HCT116 (cell line): ENCODE measurements at regions of chr1 and their contacts with region 1.

Region 1: DNA sequence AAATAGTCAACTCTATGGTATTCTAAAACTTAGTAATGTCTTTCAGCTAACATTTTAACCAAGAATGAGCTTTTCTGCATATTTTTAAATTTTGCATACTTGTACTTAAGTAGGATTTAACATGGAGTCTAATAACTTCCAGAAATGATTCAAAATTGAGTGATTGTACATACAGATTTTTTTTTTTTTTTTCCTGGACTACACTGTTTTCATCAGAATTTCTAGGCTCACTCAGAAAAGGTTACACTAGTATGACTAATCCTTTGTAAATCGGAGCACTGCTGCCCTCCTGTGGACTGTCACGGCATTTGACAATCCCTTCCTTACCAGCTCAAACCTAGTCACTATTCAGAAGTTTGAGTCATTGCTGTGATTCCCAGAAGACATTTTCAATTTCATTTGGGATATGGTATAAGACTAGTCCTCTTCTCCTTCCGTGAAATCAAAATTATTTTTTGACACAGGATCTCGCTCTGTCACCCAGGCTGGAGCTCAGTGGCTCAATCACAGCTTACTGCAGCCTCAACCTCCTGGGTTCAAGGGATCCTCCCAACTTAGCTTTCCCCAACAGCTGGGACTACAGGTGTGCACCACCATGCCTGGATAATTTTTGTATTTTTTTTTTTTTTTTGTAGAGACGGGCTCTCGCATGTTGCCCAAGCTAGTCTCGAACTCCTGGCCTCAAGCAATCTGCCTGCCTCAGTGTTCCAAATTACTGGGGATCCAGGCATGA is 45.5 kb downstream of the CD46 start:
- DNase-seq: peak; percentile 54
- ATAC-seq: peak; percentile 93
- H3K4me3 ChIP-seq: no peak overlapping the region
- H3K27ac ChIP-seq: no peak overlapping the region
- H3K4me1 ChIP-seq: peaks cover 0 to 4% of the 10 kb centered on the region in 2 experiments; a peak in 1 of 4 replicates
- H3K27me3 ChIP-seq: no peaks in the 10 kb centered on the region
- CTCF ChIP-seq: peak; percentile 69 to 83 (median 80)
- POLR2A ChIP-seq: no peak
- RAD21 ChIP-seq: peak; percentile 75

Region 2: GRCh38 chr1:206419250-206419649 is 1378.1 kb before region 1 on chr1:
- CTCF ChIA-PET with region 1: no interaction called
- POLR2A ChIA-PET with region 1: no interaction called
- RAD21 ChIA-PET with region 1: no interaction called
- intact Hi-C with region 1: no loop called
- DNase-seq: no peak
- ATAC-seq: peak; percentile 62
- H3K4me3 ChIP-seq: no peak overlapping the region
- H3K27ac ChIP-seq: no peak overlapping the region
- H3K4me1 ChIP-seq: peaks cover 6 to 21% of the 10 kb centered on the region in 2 experiments; a peak in 3 of 4 replicates
- H3K27me3 ChIP-seq: no peaks in the 10 kb centered on the region
- CTCF ChIP-seq: no peak
- POLR2A ChIP-seq: no peak
- RAD21 ChIP-seq: 0 out of 2 replicates have a peak, but pooled peaks have one; percentile 4

Region 3: DNA sequence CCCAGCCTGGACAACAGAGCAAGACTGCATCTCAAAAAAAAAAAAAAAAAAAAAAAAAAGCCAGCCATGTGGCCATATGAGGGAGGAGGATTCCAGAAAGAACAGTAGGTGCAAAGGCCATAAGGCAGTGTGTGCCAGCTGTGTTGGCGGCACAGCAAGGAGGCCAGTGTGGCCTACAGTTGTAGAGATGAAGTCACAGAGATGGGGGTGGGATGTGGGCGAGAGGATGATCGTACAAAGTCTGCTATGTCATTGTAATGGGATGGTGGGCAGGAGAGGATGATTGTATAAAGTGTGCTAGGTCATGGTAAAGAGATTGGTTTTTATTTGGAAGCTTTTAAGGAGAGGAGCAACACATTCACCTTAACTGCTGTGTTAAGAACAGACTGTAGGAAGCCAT is 311.2 kb before region 1 on chr1:
- CTCF ChIA-PET with region 1: no interaction called
- POLR2A ChIA-PET with region 1: no interaction called
- RAD21 ChIA-PET with region 1: no interaction called
- intact Hi-C with region 1: no loop called
- DNase-seq: no peak
- ATAC-seq: no peak
- H3K4me3 ChIP-seq: no peak overlapping the region
- H3K27ac ChIP-seq: no peak overlapping the region
- H3K4me1 ChIP-seq: no peaks in the 10 kb centered on the region
- H3K27me3 ChIP-seq: no peaks in the 10 kb centered on the region
- CTCF ChIP-seq: no peak
- POLR2A ChIP-seq: no peak
- RAD21 ChIP-seq: no peak

Region 4: GRCh38 chr1:207698822-207699483 is 98.4 kb before region 1 on chr1:
- CTCF ChIA-PET with region 1: interaction called, 14 read pairs
- POLR2A ChIA-PET with region 1: no interaction called
- RAD21 ChIA-PET with region 1: no interaction called
- intact Hi-C with region 1: no loop called
- DNase-seq: peak; percentile 70
- ATAC-seq: peak; percentile 99
- H3K4me3 ChIP-seq: no peak overlapping the region
- H3K27ac ChIP-seq: no peak overlapping the region
- H3K4me1 ChIP-seq: 0 out of 4 replicates have a peak, but pooled peaks cover 0 to 3% of the 10 kb centered on the region in 2 experiments
- H3K27me3 ChIP-seq: no peaks in the 10 kb centered on the region
- CTCF ChIP-seq: peak; percentile 76 to 98 (median 77)
- POLR2A ChIP-seq: no peak
- RAD21 ChIP-seq: peak; percentile 83

Region 5: DNA sequence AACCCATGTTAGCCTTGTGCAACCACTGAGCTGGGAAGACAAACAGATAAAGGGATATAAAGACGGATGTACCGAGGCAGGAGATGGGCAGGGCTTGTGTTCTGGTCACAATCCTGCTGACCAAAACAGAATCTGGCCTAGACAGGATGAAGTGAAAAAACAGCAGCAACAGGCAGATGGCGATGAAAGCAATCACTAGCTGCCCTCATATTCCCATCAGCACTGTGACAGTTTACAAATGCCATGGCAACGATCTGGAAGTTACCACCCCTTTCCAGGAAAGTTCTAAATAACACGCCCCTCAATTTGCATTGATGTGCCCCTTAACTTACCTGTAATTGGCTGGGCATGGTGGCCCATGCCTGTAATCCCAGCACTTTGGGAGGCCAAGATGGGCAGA is 86.1 kb before region 1 on chr1:
- CTCF ChIA-PET with region 1: interaction called, 8 read pairs
- POLR2A ChIA-PET with region 1: interaction called, 3 read pairs
- RAD21 ChIA-PET with region 1: no interaction called
- intact Hi-C with region 1: loop called (anchors 1 kb)
- DNase-seq: peak; percentile 59
- ATAC-seq: peak; percentile 84
- H3K4me3 ChIP-seq: no peak overlapping the region
- H3K27ac ChIP-seq: no peak overlapping the region
- H3K4me1 ChIP-seq: peaks cover 6 to 19% of the 10 kb centered on the region in 2 experiments; a peak in 3 of 4 replicates
- H3K27me3 ChIP-seq: no peaks in the 10 kb centered on the region
- CTCF ChIP-seq: peak in 2 of 3 experiments; percentile 21 to 22; a peak in 2 of 6 replicates
- POLR2A ChIP-seq: no peak
- RAD21 ChIP-seq: peak; percentile 48

Region 6: GRCh38 chr1:207838156-207839082 is 41.0 kb after region 1 on chr1:
- CTCF ChIA-PET with region 1: no interaction called
- POLR2A ChIA-PET with region 1: no interaction called
- RAD21 ChIA-PET with region 1: no interaction called
- intact Hi-C with region 1: no loop called
- DNase-seq: no peak
- ATAC-seq: no peak
- H3K4me3 ChIP-seq: no peak overlapping the region
- H3K27ac ChIP-seq: no peak overlapping the region
- H3K4me1 ChIP-seq: no peaks in the 10 kb centered on the region
- H3K27me3 ChIP-seq: no peaks in the 10 kb centered on the region
- CTCF ChIP-seq: no peak
- POLR2A ChIP-seq: no peak
- RAD21 ChIP-seq: no peak

Region 7: DNA sequence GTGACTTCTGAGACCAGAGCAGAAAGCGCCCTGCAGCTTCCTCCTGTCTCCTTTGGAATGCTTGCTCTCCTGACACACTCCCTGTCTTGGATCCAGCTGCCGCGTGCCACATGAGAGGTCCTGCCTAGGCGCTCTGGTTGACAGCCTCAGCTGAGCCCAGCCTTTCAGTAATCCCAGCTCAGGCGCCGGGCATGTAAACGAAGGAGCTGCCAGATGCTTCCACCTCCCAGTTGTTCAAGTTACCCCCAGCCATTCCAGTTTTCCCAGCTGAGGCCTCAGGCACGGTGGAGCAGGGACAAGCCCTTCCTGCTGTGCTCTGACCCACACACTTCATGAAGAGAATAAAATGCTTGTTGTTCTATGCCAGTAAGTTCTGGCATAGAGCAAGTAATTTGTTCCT is 127.8 kb after region 1 on chr1:
- CTCF ChIA-PET with region 1: no interaction called
- POLR2A ChIA-PET with region 1: no interaction called
- RAD21 ChIA-PET with region 1: no interaction called
- intact Hi-C with region 1: no loop called
- DNase-seq: no peak
- ATAC-seq: no peak
- H3K4me3 ChIP-seq: no peak overlapping the region
- H3K27ac ChIP-seq: no peak overlapping the region
- H3K4me1 ChIP-seq: no peaks in the 10 kb centered on the region
- H3K27me3 ChIP-seq: no peaks in the 10 kb centered on the region
- CTCF ChIP-seq: no peak
- POLR2A ChIP-seq: no peak
- RAD21 ChIP-seq: no peak